ENCODE measurements at regions of chr20 and their contacts with region 1.

Region 1: GRCh38 chr20:58309575-58310290 is at the start of gene RAB22A:
- DNase-seq: peak; percentile 94
- ATAC-seq: peak; percentile 95
- total RNA-seq, gene RAB22A: 8.3 TPM

Region 2: GRCh38 chr20:58388882-58389323 is 79.2 kb after region 1 on chr20 and contains the start of gene VAPB:
- intact Hi-C with region 1: loop called (anchors 2 kb)
- DNase-seq: peak; percentile 98
- ATAC-seq: peak; percentile 100
- total RNA-seq, gene VAPB: 72.4 TPM

Region 3: GRCh38 chr20:58907399-58908137 is 597.8 kb after region 1 on chr20:
- intact Hi-C with region 1: loop called (anchors 5 kb)
- DNase-seq: peak; percentile 90
- ATAC-seq: peak; percentile 95

Measured in Right ventricle myocardium inferior (tissue), 1 donor.